ENCODE measurements at regions of chr12 and their contacts with region 1.

Region 1: DNA sequence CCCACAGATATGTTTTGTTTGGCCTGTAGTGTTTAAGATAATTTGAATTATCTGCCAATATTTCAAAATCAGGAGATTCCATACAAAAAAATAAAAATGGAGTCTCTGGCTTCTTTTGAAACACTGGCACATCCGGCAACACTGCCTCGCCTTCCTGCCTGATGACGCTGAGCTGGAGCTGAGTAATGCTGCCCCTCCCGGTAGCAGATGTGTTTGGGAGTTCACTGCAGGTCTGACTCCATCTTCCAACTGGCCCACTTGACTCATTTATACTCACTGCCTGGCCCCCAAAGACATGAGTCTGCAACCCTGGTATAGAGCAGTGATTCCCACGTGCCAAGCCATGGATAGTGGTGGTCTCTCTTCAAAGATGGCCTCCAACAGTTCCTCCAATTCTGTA is 7.4 kb downstream of the CIT start:
- DNase-seq: no peak
- H3K4me3 Mint-ChIP-seq: no peak overlapping the region
- H3K27ac Mint-ChIP-seq: no peak overlapping the region
- H3K4me1 Mint-ChIP-seq: no peaks in the 10 kb centered on the region
- H3K27me3 Mint-ChIP-seq: no peaks in the 10 kb centered on the region
- CTCF ChIP-seq: no peak

Region 2: DNA sequence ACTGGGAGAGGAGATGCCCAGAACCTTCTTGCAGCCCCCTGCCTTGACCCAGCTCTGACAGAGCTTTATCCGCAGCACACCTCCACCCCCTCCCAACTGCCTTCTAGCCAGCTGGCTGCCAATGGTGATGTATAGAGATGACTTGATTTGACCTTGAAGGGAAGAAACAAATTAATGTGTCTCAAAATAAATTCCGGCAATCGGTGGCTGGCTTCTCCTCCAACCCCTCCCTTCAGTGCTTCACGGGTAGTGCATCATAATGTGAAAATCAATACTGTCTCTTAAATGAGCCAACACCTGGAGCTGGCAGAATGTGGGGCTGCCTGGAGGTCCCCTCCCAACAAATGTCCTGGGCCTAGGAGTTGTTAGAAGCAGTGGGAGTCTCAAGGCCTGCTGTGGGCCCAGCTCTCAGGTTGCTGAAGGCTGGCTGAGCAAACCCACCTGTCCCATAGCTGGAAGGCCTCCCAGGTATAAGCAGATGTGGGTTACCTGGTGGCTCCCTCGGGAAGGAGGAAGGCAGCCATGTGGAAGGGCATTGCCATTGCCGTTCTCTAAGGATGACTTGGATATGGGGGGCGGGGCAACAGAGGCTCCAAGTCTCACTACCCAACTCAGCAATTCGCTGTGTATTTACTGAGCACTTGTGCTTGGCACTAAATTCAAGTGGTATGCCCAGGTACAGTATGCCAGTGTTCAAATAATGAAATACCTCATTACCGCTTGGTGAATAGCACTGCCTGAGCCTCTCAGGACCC is 667.8 kb before region 1 on chr12:
- CTCF ChIA-PET with region 1: no interaction called
- intact Hi-C with region 1: no loop called
- DNase-seq: no peak
- H3K4me3 Mint-ChIP-seq: no peak overlapping the region
- H3K27ac Mint-ChIP-seq: no peak overlapping the region
- H3K4me1 Mint-ChIP-seq: no peaks in the 10 kb centered on the region
- H3K27me3 Mint-ChIP-seq: peaks cover 18% of the 10 kb centered on the region
- CTCF ChIP-seq: no peak

Region 3: DNA sequence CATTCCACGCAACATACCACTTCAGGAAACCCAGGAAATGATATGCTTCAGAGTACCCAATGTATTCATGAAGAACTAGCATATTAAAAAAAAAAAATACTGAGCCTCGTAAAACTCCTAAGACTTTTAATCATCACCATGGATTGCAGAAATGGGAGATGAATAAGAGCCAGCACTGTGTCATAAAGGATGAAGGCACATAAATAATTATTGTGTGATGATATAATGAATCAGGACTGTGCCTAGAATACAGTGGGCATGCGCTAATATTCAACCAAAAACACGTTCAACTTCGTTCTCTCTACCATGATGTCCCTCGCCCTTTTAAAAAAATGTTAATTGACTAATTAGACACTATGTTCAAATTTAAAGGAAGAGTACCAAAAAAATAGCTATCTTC is 61.3 kb before region 1 on chr12:
- CTCF ChIA-PET with region 1: no interaction called
- intact Hi-C with region 1: no loop called
- DNase-seq: no peak
- H3K4me3 Mint-ChIP-seq: no peak overlapping the region
- H3K27ac Mint-ChIP-seq: no peak overlapping the region
- H3K4me1 Mint-ChIP-seq: peaks cover 30% of the 10 kb centered on the region
- H3K27me3 Mint-ChIP-seq: no peaks in the 10 kb centered on the region
- CTCF ChIP-seq: no peak

Region 4: DNA sequence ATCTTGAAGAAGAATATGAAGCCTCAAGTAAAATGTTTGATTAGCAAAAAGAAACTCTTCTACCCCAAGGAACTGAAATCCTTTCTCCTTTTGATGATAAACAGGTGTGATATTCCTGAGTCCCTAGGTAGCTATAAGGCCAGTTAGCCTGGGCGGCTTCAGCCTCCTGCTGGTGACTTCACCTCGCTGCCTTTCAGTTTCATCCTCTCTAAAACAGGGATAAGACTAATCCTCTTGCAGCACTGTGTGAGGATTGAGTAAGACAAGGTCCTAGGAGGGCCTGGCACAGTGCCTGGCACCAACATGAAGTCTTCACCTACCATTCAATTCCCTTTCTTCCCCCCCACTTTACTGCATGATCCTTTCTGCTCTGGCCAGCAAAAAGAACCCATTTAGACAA is 34.7 kb before region 1 on chr12:
- CTCF ChIA-PET with region 1: no interaction called
- intact Hi-C with region 1: loop called (anchors 2 kb)
- DNase-seq: no peak
- H3K4me3 Mint-ChIP-seq: no peak overlapping the region
- H3K27ac Mint-ChIP-seq: no peak overlapping the region
- H3K4me1 Mint-ChIP-seq: no peaks in the 10 kb centered on the region
- H3K27me3 Mint-ChIP-seq: no peaks in the 10 kb centered on the region
- CTCF ChIP-seq: no peak